ENCODE measurements at regions of chr16 and their contacts with region 1.

Region 1: DNA sequence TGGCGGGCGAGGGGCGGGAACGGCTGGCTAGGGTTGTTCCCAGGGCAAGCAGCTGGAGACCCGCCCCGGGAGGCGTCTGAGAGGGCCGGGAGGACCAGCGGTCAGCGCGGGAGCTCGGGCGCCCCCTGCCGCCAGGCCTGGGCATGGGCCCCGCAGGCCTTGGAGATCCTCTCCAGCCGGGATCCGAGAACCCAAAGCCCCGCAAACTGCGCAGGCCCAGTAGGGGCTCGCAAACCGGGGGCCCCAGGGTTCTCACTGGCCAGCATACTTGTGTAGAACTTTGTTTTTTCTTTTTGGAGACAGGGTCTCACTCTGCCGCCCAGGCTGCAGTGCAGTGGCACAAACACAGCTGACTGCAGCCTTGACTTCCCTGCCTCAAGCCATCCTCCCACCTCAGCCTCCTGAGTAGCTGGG is 20.8 kb upstream of the ZNF423 start:
- DNase-seq: peak; percentile 25
- H3K4me3 ChIP-seq: no peak overlapping the region
- H3K27ac ChIP-seq: no peak overlapping the region
- H3K4me1 ChIP-seq: no peaks in the 10 kb centered on the region
- H3K27me3 ChIP-seq: peaks cover 4 to 8% of the 10 kb centered on the region in 2 experiments
- CTCF ChIP-seq: peak; percentile 88 to 94
- POLR2A ChIP-seq: no peak

Region 2: GRCh38 chr16:49407873-49408550 is 468.7 kb before region 1 on chr16:
- CTCF ChIA-PET with region 1: interaction called, 11 read pairs
- POLR2A ChIA-PET with region 1: no interaction called
- dilution Hi-C with region 1: no loop called
- intact Hi-C with region 1: loop called (anchors 1 kb)
- DNase-seq: peak; percentile 72
- H3K4me3 ChIP-seq: no peak overlapping the region
- H3K27ac ChIP-seq: no peak overlapping the region
- H3K4me1 ChIP-seq: no peaks in the 10 kb centered on the region
- H3K27me3 ChIP-seq: no peaks in the 10 kb centered on the region
- CTCF ChIP-seq: peak; percentile 71 to 81
- POLR2A ChIP-seq: no peak

Region 3: DNA sequence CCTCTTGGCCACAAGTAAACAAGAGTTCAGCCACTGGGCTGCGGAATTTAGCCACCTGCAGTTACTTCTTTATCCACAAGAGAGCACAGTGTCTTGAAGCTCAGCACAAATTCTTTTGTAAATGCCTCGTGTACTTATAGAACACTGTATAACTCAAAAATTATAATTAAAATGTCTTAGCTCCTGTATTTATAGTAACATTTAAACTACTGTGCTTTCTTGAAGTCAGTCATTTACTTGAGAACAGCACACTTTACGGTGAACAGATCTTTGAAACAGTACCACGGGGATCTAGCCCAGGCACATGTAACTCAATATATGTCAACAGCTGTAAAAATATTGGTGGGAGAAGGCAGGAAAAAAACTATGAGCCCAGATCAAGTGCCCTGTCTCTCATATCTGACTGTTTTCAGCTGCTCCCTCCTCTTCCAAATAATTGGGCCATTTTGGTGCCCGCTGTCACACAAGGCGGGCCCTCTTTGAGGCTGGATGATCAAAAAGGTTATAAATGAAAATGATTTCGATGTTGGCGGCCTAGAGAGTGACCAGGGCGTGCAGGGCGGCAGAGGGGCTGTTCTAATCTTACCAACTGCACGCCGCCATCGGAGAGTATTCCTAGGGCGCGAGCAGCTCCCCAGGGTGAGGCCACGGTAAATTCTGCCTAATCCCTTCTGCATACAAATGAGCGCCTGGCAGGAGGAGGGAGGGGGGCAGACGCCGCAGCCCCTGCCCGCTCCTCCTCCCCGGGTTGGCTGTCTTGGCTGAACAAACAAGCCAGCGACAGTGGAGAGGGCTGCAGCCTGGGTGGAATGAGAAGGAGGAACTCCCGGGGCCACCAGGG is 319.9 kb before region 1 on chr16:
- CTCF ChIA-PET with region 1: interaction called, 7 read pairs
- POLR2A ChIA-PET with region 1: no interaction called
- dilution Hi-C with region 1: no loop called
- intact Hi-C with region 1: loop called (anchors 2 kb)
- DNase-seq: peak; percentile 47
- H3K4me3 ChIP-seq: no peak overlapping the region
- H3K27ac ChIP-seq: no peak overlapping the region
- H3K4me1 ChIP-seq: no peaks in the 10 kb centered on the region
- H3K27me3 ChIP-seq: no peaks in the 10 kb centered on the region
- CTCF ChIP-seq: peak; percentile 24 to 47
- POLR2A ChIP-seq: no peak

Region 4: DNA sequence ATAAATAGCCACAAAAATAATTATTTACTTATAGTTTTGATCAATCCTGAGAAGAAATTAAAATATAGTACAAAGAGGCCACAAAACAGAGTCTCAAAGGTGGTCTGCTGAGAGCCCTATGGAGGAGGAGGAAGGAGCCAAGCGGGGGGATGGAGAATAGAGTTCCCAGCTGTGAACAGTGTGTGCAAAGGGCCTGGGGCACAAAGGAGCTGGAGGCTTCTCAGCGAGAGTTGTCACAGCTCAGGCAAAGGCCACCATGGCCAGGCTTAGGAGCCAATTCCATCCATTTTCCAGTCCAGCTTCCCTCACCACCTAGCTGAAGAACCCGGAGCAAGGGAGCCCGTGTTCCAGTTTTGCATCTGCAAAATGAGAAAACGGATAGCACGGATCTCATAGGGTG is 15.4 kb before region 1 on chr16:
- CTCF ChIA-PET with region 1: interaction called, 44 read pairs
- POLR2A ChIA-PET with region 1: no interaction called
- dilution Hi-C with region 1: no loop called
- intact Hi-C with region 1: loop called (anchors 2 kb)
- DNase-seq: no peak
- H3K4me3 ChIP-seq: no peak overlapping the region
- H3K27ac ChIP-seq: no peak overlapping the region
- H3K4me1 ChIP-seq: peaks cover 2% of the 10 kb centered on the region
- H3K27me3 ChIP-seq: peaks cover 26 to 53% of the 10 kb centered on the region in 2 experiments
- CTCF ChIP-seq: no peak
- POLR2A ChIP-seq: no peak

Region 5: GRCh38 chr16:49890876-49891275 is 14.2 kb after region 1 on chr16:
- CTCF ChIA-PET with region 1: interaction called, 14 read pairs
- POLR2A ChIA-PET with region 1: no interaction called
- dilution Hi-C with region 1: no loop called
- intact Hi-C with region 1: no loop called
- DNase-seq: peak; percentile 20
- H3K4me3 ChIP-seq: no peak overlapping the region
- H3K27ac ChIP-seq: no peak overlapping the region
- H3K4me1 ChIP-seq: no peaks in the 10 kb centered on the region
- H3K27me3 ChIP-seq: no peaks in the 10 kb centered on the region
- CTCF ChIP-seq: peak in 1 of 2 donors; percentile 44
- POLR2A ChIP-seq: no peak

Measured in endothelial cell of umbilical vein (primary cell).